ENCODE measurements at regions of chr17 and their contacts with region 1.

Region 1: DNA sequence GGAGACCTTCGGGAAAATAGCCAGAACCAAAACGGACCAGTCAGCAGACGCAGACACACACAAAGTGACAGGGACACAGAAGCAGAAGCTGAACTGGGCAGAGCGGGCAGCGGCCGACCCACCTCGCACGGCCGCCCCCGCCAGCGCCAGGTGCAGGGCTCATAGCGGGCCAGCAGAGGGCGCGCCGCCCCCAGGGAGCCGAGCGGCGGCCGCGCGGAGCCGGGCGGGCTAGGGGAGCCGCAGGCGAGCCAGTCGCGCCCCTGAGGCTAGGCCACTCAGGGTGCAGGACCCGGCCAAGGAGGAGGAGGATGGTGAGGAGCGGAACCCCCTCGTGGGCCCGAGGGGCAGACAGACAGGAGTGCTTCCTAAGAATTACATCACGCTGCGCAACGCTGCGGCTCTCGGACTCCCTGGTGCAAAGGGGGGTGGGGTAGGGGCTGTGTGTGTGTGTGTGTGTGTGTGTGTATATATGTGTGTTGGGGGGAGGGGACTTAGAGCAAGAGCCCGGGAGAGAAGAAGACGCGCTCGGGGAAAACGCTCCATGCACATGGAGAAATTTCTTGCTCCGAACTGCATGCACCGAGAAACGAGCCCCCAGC is 913 bp upstream of the NOG start:
- DNase-seq: peak; percentile 92
- H3K4me3 Mint-ChIP-seq: peak overlapping the region; percentile 75
- H3K27ac Mint-ChIP-seq: peak overlapping the region; percentile 37
- H3K4me1 Mint-ChIP-seq: peaks cover 13% of the 10 kb centered on the region
- H3K27me3 Mint-ChIP-seq: peaks cover 61% of the 10 kb centered on the region

Region 2: DNA sequence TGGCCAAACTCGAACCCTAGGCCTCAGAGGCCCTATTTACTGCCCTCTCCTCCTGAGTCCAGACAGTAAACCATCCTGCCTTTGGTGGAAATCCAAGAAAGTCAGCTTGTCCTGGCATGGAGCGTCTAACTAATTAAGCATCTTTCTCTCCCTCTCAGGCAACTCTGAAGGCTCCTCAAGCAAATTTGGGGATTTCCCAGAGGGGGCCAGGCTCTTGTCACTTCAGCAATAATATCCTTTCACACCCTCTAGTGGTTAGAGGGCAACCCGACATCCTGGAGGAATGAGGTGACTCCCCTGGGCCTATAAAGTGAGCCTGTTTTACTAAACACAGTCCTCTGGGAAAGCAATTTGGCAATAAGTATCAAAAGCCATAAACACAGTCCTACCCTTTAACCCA is 61.3 kb after region 1 on chr17:
- intact Hi-C with region 1: loop called (anchors 1 kb)
- DNase-seq: peak; percentile 90
- H3K4me3 Mint-ChIP-seq: no peak overlapping the region
- H3K27ac Mint-ChIP-seq: no peak overlapping the region
- H3K4me1 Mint-ChIP-seq: peaks cover 3% of the 10 kb centered on the region
- H3K27me3 Mint-ChIP-seq: peaks cover 12% of the 10 kb centered on the region

Region 3: GRCh38 chr17:56679115-56679766 is 86.7 kb after region 1 on chr17:
- intact Hi-C with region 1: loop called (anchors 2 kb)
- DNase-seq: peak; percentile 70
- H3K4me3 Mint-ChIP-seq: peak overlapping the region; percentile 43
- H3K27ac Mint-ChIP-seq: no peak overlapping the region
- H3K4me1 Mint-ChIP-seq: peaks cover 18% of the 10 kb centered on the region
- H3K27me3 Mint-ChIP-seq: peaks cover 45% of the 10 kb centered on the region

Region 4: GRCh38 chr17:56715613-56716357 is 123.2 kb after region 1 on chr17:
- intact Hi-C with region 1: loop called (anchors 1 kb)
- DNase-seq: peak; percentile 93
- H3K4me3 Mint-ChIP-seq: no peak overlapping the region
- H3K27ac Mint-ChIP-seq: no peak overlapping the region
- H3K4me1 Mint-ChIP-seq: no peaks in the 10 kb centered on the region
- H3K27me3 Mint-ChIP-seq: no peaks in the 10 kb centered on the region

Region 5: GRCh38 chr17:56779898-56780733 is 187.5 kb after region 1 on chr17:
- intact Hi-C with region 1: loop called (anchors 1 kb)
- DNase-seq: peak; percentile 97
- H3K4me3 Mint-ChIP-seq: peak overlapping the region; percentile 89
- H3K27ac Mint-ChIP-seq: peak overlapping the region; percentile 86
- H3K4me1 Mint-ChIP-seq: peaks cover 33% of the 10 kb centered on the region
- H3K27me3 Mint-ChIP-seq: peaks cover 4% of the 10 kb centered on the region

Region 6: GRCh38 chr17:56880133-56880532 is 287.5 kb after region 1 on chr17:
- intact Hi-C with region 1: no loop called
- DNase-seq: no peak
- H3K4me3 Mint-ChIP-seq: no peak overlapping the region
- H3K27ac Mint-ChIP-seq: no peak overlapping the region
- H3K4me1 Mint-ChIP-seq: no peaks in the 10 kb centered on the region
- H3K27me3 Mint-ChIP-seq: no peaks in the 10 kb centered on the region

Region 7: DNA sequence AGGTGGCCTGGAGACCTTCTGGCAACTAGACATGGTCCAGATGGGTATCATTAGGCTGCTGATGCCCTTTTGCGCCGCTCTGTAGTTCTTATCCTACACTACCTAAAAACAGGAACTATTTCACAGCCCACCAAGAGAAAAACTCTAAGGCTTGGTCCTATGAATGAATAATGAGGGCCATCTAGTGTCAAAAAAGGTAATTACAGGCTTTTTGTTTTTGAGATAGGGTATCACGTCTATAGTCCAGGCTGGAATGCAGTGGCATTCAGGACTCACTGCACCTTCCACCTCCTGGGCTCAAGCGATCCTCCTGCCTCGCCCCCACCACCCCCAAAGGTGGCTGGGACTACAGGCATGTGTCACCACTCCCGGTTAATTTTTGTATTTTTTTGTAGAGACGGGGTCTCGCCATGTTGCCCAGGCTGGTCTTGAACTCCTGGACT is 347.3 kb after region 1 on chr17:
- intact Hi-C with region 1: loop called (anchors 10 kb)
- DNase-seq: peak; percentile 70
- H3K4me3 Mint-ChIP-seq: no peak overlapping the region
- H3K27ac Mint-ChIP-seq: peak overlapping the region; percentile 63
- H3K4me1 Mint-ChIP-seq: peaks cover 19% of the 10 kb centered on the region
- H3K27me3 Mint-ChIP-seq: no peaks in the 10 kb centered on the region

Measured in activated CD4-positive, alpha-beta T cell treated with anti-CD3 and anti-CD28 coated beads, Interleukin-2, amount 10 ng/mL, durations not matched to agents 24 days and 14 days (primary cell).